Caco-2 (cell line): ENCODE measurements at regions of chr1 and their contacts with region 1.

Region 1: GRCh38 chr1:6359216-6360116 is 34.1 kb downstream of the ACOT7 start:
- DNase-seq: peak; percentile 80 to 89
- H3K4me3 ChIP-seq: peak overlapping the region; percentile 47
- H3K4me3 Mint-ChIP-seq: peak overlapping the region; percentile 100
- H3K27ac Mint-ChIP-seq: peak overlapping the region; percentile 100
- H3K4me1 ChIP-seq: peaks cover 58% of the 10 kb centered on the region
- H3K4me1 Mint-ChIP-seq: peaks cover 18% of the 10 kb centered on the region
- H3K27me3 ChIP-seq: no peaks in the 10 kb centered on the region
- H3K27me3 Mint-ChIP-seq: no peaks in the 10 kb centered on the region
- CTCF ChIP-seq: peak in 1 of 2 experiments; percentile 10

Region 2: GRCh38 chr1:6199298-6200187 is 159.9 kb before region 1 on chr1 and contains the start of gene RPL22:
- CTCF ChIA-PET with region 1: no interaction called
- POLR2A ChIA-PET with region 1: interaction called, 13 read pairs
- intact Hi-C with region 1: no loop called
- DNase-seq: peak; percentile 95 to 98
- H3K4me3 ChIP-seq: peak within 1 kb of the TSS; percentile 87
- H3K4me3 Mint-ChIP-seq: peak within 1 kb of the TSS; percentile 83
- H3K27ac Mint-ChIP-seq: peak within 1 kb of the TSS; percentile 95
- H3K4me1 ChIP-seq: peaks cover 14% of the 10 kb centered on the region
- H3K4me1 Mint-ChIP-seq: peaks cover 18% of the 10 kb centered on the region
- H3K27me3 ChIP-seq: no peaks in the 10 kb centered on the region
- H3K27me3 Mint-ChIP-seq: no peaks in the 10 kb centered on the region
- CTCF ChIP-seq: no peak
- total RNA-seq, gene RPL22: 406 and 418 TPM in 2 replicates

Region 3: GRCh38 chr1:6378096-6378746 is 18.8 kb after region 1 on chr1:
- CTCF ChIA-PET with region 1: interaction called, 3 read pairs
- POLR2A ChIA-PET with region 1: no interaction called
- intact Hi-C with region 1: loop called (anchors 2 kb)
- DNase-seq: no peak
- H3K4me3 ChIP-seq: no peak overlapping the region
- H3K4me3 Mint-ChIP-seq: no peak overlapping the region
- H3K27ac Mint-ChIP-seq: no peak overlapping the region
- H3K4me1 ChIP-seq: no peaks in the 10 kb centered on the region
- H3K4me1 Mint-ChIP-seq: no peaks in the 10 kb centered on the region
- H3K27me3 ChIP-seq: no peaks in the 10 kb centered on the region
- H3K27me3 Mint-ChIP-seq: no peaks in the 10 kb centered on the region
- CTCF ChIP-seq: no peak